AG04450 (cell line): ENCODE measurements at regions of chr3 and their contacts with region 1.

Region 1: DNA sequence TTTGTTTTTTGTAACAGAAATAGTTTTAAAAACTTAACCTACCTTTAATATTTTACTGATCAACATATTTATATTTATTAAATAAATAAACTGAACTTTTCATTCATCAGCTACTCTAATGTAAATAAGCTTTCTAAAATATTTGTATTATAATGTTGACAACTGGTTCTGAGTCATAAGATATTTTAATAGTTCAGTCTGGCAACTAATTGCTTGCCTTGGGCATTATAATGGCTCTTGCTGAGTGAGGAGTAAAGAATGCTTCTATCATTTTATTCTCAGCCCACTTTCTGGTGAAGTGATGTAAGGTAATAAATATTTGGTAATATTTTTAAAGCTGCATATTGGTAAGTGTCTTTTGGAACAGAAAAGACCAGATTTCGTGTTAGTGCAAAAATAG is 81.5 kb downstream of the DIPK2A start:
- DNase-seq: peak; percentile 34
- H3K4me3 ChIP-seq: no peak overlapping the region
- H3K27ac ChIP-seq: no peak overlapping the region
- H3K27me3 ChIP-seq: no peaks in the 10 kb centered on the region
- CTCF ChIP-seq: no peak

Region 2: GRCh38 chr3:142385078-142385477 is 1668.0 kb before region 1 on chr3:
- CTCF ChIA-PET with region 1: no interaction called
- POLR2A ChIA-PET with region 1: interaction called, 10 read pairs
- DNase-seq: no peak
- H3K4me3 ChIP-seq: no peak overlapping the region
- H3K27ac ChIP-seq: no peak overlapping the region
- H3K27me3 ChIP-seq: no peaks in the 10 kb centered on the region
- CTCF ChIP-seq: no peak

Region 3: DNA sequence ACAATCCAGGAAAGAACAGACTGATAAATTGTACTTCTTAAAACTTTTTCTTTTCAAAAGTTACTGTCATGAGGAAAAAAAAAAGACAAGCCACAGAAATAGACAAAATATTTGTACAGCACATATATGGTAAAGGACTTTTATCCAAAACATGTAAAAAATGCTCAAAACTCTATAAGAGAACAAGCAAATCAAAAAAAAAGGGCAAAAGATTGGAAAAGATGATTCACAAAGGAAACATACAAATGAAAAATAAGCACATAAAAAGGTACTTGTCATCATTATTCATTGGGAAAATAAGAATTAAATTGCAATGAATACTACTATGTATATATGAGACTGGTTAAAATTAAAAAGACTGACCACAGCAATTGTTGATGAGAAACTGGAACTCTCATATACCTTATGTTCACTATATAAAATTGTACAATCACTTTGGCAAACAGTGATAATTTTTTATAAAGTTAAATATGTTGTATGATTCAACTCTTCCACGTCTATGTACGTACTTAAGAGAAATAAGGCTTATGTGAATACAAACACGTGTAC is 41.8 kb before region 1 on chr3:
- CTCF ChIA-PET with region 1: no interaction called
- POLR2A ChIA-PET with region 1: interaction called, 19 read pairs
- DNase-seq: no peak
- H3K4me3 ChIP-seq: no peak overlapping the region
- H3K27ac ChIP-seq: no peak overlapping the region
- H3K27me3 ChIP-seq: no peaks in the 10 kb centered on the region
- CTCF ChIP-seq: no peak